HEK293 (cell line): ENCODE measurements at regions of chr5 and their contacts with region 1.

Region 1: DNA sequence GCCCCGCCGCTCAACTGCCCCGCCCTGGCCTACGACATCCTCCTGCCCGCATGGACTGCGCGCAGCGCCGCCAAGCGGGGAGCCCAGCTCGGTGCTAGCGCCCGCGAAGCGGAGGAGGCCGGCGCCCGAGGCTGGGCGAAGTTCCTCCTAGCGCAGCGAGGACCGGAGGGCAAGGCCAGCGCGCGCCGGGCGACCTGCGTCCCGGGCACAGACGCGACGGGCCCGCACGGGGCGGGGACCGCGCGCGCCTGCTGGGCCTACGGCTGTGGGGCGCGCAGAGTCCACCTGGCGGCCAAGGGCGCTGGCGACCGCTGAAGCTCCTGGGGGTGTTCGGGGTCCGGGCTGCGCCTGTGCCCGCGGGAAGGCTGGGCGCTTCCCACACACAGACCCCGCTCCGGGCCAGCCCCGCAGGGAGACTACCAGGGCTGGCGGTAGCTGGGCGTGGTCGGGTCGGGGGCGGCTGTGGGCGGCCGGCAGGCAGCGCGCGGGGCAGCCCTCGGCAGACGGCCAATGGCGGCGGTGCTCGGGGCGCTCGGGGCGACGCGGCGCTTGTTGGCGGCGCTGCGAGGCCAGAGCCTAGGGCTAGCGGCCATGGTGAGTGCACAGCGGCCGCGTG is at the start of gene PCBD2:
- H3K4me3 ChIP-seq: peak within 1 kb of the TSS; percentile 83
- H3K27ac ChIP-seq: peak within 1 kb of the TSS; percentile 96
- H3K4me1 ChIP-seq: no peaks in the 10 kb centered on the region
- CTCF ChIP-seq: peak; percentile 96

Region 2: DNA sequence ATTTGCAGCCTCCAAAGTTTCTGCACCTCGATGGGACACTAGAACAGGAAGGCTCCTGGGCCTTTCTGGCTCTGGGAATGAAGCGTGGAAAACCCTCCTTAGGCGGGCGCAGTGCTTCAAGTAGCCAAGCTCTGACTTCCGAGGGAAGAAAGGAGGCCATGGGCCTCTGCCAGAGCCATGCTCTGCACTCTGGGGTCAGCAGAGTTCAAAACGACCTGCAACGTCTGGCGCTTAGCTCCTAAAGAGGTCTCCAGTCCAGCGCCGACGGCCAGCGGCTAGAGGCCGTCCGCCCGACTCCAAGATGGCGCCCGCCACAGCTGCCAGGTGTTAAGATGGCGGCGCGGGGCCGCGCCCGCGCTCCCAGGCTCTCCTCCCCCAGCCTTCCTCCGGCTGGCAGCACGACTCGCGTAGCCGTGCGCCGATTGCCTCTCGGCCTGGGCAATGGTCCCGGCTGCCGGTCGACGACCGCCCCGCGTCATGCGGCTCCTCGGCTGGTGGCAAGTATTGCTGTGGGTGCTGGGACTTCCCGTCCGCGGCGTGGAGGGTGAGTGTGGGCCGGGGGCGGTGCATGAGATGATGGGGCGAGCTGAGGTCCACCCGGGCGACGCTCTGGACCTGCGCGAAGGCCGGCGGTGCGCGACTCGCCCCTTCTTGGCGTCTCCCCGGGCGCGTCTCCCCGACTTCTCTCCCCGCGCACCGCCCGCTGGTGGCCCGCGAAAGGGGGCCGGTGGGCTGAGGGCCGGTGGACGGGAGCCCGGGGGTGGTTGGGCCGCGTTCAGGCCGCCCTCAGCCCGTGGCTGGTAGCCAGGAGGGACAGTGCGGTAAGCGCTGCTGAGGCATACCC is 30.5 kb before region 1 on chr5 and contains the start of gene TXNDC15:
- CTCF ChIA-PET with region 1: interaction called, 10 read pairs
- POLR2A ChIA-PET with region 1: interaction called, 17 read pairs
- H3K4me3 ChIP-seq: peak within 1 kb of the TSS; percentile 93
- H3K27ac ChIP-seq: peak within 1 kb of the TSS; percentile 92
- H3K4me1 ChIP-seq: no peaks in the 10 kb centered on the region; the same call in 1 of the 2 replicates
- CTCF ChIP-seq: peak; percentile 31

Region 3: DNA sequence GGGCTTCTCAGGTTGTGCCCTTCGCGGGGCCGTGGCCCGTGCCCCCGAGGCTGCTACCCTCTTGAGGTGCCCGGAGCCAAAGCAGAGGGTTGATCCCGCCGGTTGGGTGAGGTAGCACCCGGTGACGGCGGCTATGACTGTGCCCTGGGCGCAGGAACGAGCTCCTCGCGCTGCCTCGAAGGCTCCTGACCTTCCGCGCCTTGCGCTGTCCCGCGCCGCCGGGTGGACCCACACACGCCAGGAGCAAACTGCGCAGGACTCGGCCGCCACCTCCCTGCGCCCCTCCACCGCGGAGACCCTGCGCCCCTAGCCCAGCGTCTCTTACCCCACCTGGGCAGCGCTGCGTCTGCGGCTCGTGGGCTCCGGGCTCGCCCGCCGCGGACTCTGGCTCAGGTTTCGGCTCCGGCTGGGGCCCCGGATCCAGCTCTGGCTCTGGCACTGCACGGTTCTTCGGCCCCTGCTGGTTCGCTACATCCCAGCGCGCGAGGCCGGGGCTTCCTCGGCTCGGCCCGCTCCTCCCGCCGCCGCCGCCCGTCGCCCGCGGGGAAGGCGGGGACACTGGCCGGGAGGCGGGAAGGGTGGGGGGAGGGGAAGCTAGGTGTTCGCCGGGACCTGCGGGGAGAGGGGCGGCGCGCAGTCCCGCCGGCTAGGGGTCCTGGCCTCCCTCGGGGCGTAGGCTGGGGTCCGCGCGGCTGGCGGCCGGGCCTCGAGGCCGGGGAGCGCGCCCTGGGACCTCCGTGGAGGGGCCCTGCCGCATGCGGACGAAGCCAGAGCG is 134.7 kb after region 1 on chr5:
- CTCF ChIA-PET with region 1: no interaction called
- POLR2A ChIA-PET with region 1: no interaction called
- H3K4me3 ChIP-seq: peak overlapping the region; percentile 26
- H3K27ac ChIP-seq: peak overlapping the region; percentile 34; the same call in 1 of the 2 replicates
- H3K4me1 ChIP-seq: peaks cover 9% of the 10 kb centered on the region
- CTCF ChIP-seq: no peak